Head of caudate nucleus (tissue), 42 donors: ENCODE measurements at regions of chr4 and their contacts with region 1.

Region 1: DNA sequence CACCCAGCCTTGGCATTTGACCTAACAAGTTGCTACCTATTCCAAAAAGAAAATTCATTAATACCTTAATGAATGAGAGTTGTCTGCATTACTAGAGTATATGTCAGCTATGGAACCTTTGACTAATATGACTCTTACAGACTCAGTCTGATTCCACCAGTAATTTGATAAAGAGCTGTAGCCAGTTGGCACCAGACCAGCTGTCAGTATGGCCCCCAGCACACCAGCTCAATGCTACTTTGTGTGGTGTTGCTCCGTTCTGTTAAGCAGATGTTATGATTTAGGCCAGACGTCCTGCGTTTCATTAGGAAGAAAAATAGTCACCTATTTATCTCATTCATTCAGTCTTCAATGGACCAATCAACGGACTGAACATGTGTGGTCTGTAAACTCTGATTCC is 215.5 kb downstream of the TLL1 start:
- DNase-seq: no peak

Region 2: GRCh38 chr4:165537028-165537648 is 551.4 kb before region 1 on chr4:
- intact Hi-C with region 1: loop called (anchors 5 kb)
- DNase-seq: peak in 4 of 42 donors; percentile 3 to 50 (median 8)